H1 (cell line): ENCODE measurements at regions of chr3 and their contacts with region 1.

Region 1: DNA sequence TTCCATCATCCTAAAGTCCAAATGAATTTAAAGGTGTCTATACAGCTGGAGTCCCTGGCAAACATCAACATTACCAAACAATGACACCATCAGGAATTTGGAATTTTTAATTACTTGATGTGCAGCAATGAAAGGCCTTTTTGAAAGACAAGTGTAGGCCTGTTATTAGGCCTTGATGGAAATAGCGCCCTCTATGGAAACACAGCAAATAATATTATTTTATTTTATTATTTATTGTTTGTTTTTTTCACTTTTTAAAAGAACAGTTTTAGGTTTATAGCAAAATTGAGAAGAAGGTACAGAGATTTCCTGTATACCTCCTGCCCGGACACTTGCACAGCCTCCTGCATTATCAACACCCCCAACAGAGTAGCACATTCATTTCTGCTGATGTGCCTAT is 18.1 kb upstream of the OR5AC2 start:
- DNase-seq: no peak
- H3K4me3 ChIP-seq: no peak overlapping the region
- H3K27ac ChIP-seq: no peak overlapping the region
- H3K4me1 ChIP-seq: no peaks in the 10 kb centered on the region
- H3K27me3 ChIP-seq: no peaks in the 10 kb centered on the region
- CTCF ChIP-seq: no peak; a peak in 1 of 4 replicates
- EP300 ChIP-seq: no peak
- POLR2A ChIP-seq: no peak
- RAD21 ChIP-seq: no peak

Region 2: GRCh38 chr3:98058244-98058960 is 10.4 kb before region 1 on chr3:
- CTCF ChIA-PET with region 1: interaction called, 14 read pairs
- POLR2A ChIA-PET with region 1: no interaction called
- DNase-seq: no peak
- H3K4me3 ChIP-seq: no peak overlapping the region
- H3K27ac ChIP-seq: no peak overlapping the region
- H3K4me1 ChIP-seq: no peaks in the 10 kb centered on the region
- H3K27me3 ChIP-seq: no peaks in the 10 kb centered on the region
- CTCF ChIP-seq: no peak
- EP300 ChIP-seq: no peak
- POLR2A ChIP-seq: no peak
- RAD21 ChIP-seq: no peak

Region 3: GRCh38 chr3:98095870-98096269 is 27.0 kb after region 1 on chr3:
- CTCF ChIA-PET with region 1: no interaction called
- POLR2A ChIA-PET with region 1: no interaction called
- DNase-seq: no peak
- H3K4me3 ChIP-seq: no peak overlapping the region
- H3K27ac ChIP-seq: no peak overlapping the region
- H3K4me1 ChIP-seq: no peaks in the 10 kb centered on the region
- H3K27me3 ChIP-seq: no peaks in the 10 kb centered on the region
- CTCF ChIP-seq: no peak
- EP300 ChIP-seq: no peak
- POLR2A ChIP-seq: no peak
- RAD21 ChIP-seq: no peak

Region 4: DNA sequence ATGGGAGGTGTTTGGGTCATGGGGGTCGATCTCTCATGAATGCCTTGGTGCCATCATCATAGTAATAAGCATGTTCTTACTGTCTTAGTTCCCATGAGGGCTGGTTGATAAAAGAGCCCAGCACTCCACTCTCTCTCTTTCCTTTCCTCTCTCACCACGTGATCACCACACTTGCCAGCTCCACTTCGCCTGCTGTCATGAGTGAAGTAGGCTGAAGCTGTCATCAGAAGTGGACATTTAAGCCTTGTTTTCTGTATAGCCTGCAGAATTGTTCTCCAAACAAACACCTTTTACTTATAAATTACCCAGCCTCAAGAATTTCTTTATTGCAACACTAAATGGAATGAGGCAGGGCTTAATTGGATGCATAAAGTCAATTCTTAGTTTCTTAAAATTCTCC is 67.8 kb after region 1 on chr3:
- CTCF ChIA-PET with region 1: no interaction called
- POLR2A ChIA-PET with region 1: no interaction called
- DNase-seq: no peak
- H3K4me3 ChIP-seq: no peak overlapping the region
- H3K27ac ChIP-seq: no peak overlapping the region
- H3K4me1 ChIP-seq: peaks cover 0 to 5% (median 0%) of the 10 kb centered on the region in 4 experiments; a peak in 1 of 7 replicates
- H3K27me3 ChIP-seq: no peaks in the 10 kb centered on the region
- CTCF ChIP-seq: no peak
- EP300 ChIP-seq: no peak
- POLR2A ChIP-seq: no peak
- RAD21 ChIP-seq: no peak